Caco-2 (cell line): ENCODE measurements at regions of chr6 and their contacts with region 1.

Region 1: GRCh38 chr6:99330159-99330558 is 19.3 kb downstream of the FAXC start:
- DNase-seq: peak in 1 of 2 experiments; percentile 53
- H3K4me3 ChIP-seq: no peak overlapping the region
- H3K4me3 Mint-ChIP-seq: no peak overlapping the region
- H3K27ac Mint-ChIP-seq: no peak overlapping the region
- H3K4me1 ChIP-seq: no peaks in the 10 kb centered on the region
- H3K4me1 Mint-ChIP-seq: no peaks in the 10 kb centered on the region
- H3K27me3 ChIP-seq: no peaks in the 10 kb centered on the region
- H3K27me3 Mint-ChIP-seq: no peaks in the 10 kb centered on the region
- CTCF ChIP-seq: peak; percentile 49 to 66

Region 2: DNA sequence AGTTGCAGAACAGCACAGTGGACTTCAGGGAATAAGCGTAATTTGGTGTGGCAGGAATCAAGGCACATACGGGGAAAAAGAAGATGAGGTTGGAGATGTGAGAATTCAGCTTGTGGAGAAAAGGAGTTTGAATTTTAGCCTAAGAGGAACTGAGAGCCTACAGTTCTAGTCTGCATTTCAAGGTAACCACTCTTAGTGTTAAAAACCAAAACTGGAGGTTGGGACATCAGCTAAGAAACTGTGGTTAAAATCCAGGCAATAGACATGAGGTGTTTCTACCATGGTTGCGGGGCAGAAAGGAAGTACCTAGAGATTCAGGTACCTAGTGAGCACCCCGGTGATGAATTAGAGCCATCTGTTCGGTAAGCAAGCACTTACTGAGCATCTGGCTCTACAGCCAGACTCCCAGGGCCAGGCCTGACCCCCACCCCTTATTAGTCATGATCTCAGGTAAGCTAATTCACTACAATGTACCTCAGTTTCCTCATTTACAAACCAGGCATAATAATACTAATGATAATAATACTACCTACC is 25.1 kb before region 1 on chr6:
- CTCF ChIA-PET with region 1: no interaction called
- POLR2A ChIA-PET with region 1: no interaction called
- intact Hi-C with region 1: no loop called
- DNase-seq: no peak
- H3K4me3 ChIP-seq: no peak overlapping the region
- H3K4me3 Mint-ChIP-seq: no peak overlapping the region
- H3K27ac Mint-ChIP-seq: no peak overlapping the region
- H3K4me1 ChIP-seq: no peaks in the 10 kb centered on the region
- H3K4me1 Mint-ChIP-seq: no peaks in the 10 kb centered on the region
- H3K27me3 ChIP-seq: no peaks in the 10 kb centered on the region
- H3K27me3 Mint-ChIP-seq: peaks cover 16% of the 10 kb centered on the region
- CTCF ChIP-seq: no peak

Region 3: GRCh38 chr6:99349171-99350141 is 19.3 kb after region 1 on chr6 and contains the start of gene FAXC:
- CTCF ChIA-PET with region 1: interaction called, 3 read pairs
- POLR2A ChIA-PET with region 1: no interaction called
- intact Hi-C with region 1: loop called (anchors 2 kb)
- DNase-seq: peak; percentile 47 to 68
- H3K4me3 ChIP-seq: peak within 1 kb of the TSS; percentile 50
- H3K4me3 Mint-ChIP-seq: peak within 1 kb of the TSS; percentile 56
- H3K27ac Mint-ChIP-seq: no peak within 1 kb of the TSS
- H3K4me1 ChIP-seq: no peaks in the 10 kb centered on the region
- H3K4me1 Mint-ChIP-seq: no peaks in the 10 kb centered on the region
- H3K27me3 ChIP-seq: no peaks in the 10 kb centered on the region
- H3K27me3 Mint-ChIP-seq: peaks cover 15% of the 10 kb centered on the region
- CTCF ChIP-seq: peak; percentile 29 to 42
- total RNA-seq, gene FAXC: 0.16 and 0.86 TPM in 2 replicates

Region 4: DNA sequence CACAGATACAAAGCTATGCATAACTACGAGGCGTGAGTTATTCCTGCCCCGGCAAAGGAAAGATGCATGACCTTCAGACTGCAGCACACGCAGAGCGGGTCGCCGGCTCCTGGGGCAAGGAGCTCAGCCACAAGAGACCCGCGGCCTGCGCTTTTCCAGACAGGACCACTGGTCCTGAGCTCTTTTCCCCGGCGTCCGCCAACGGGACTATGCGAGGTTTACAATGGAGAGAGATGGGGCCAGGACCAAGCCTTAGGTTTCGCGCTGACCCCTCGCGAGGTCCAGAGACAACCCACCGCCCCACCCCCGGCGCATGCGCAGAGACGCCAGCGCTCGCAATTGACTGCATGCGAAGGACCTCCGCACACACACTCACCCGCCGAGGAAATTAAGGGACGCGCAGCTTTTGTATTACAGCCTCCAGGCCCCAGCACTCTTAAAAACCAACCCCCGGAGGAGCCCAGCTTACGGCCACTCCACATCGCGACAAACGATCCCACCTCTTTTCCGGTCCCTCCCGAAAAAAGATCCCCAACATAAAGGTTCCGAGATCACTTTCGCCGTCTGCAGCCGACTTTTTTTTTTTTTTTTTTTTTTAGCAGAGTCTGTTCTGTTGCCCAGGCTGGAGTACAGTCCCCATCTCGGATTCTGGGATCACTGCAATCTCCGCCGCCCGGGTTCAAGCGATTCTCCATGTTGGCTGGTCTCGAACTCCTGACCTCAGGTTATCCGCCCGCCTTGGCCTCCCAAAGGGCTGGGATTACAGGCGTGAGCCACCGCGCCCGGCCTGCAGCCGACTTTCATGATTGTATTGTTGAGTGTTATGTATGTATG is 63.8 kb after region 1 on chr6 and contains the start of gene COQ3:
- CTCF ChIA-PET with region 1: interaction called, 6 read pairs
- POLR2A ChIA-PET with region 1: interaction called, 5 read pairs
- intact Hi-C with region 1: loop called (anchors 1 kb)
- DNase-seq: peak; percentile 88
- H3K4me3 ChIP-seq: peak within 1 kb of the TSS; percentile 68
- H3K4me3 Mint-ChIP-seq: peak within 1 kb of the TSS; percentile 90
- H3K27ac Mint-ChIP-seq: peak within 1 kb of the TSS; percentile 92
- H3K4me1 ChIP-seq: no peaks in the 10 kb centered on the region
- H3K4me1 Mint-ChIP-seq: no peaks in the 10 kb centered on the region
- H3K27me3 ChIP-seq: no peaks in the 10 kb centered on the region
- H3K27me3 Mint-ChIP-seq: no peaks in the 10 kb centered on the region
- CTCF ChIP-seq: no peak
- total RNA-seq, gene COQ3: 5.8 and 6.4 TPM in 2 replicates

Region 5: DNA sequence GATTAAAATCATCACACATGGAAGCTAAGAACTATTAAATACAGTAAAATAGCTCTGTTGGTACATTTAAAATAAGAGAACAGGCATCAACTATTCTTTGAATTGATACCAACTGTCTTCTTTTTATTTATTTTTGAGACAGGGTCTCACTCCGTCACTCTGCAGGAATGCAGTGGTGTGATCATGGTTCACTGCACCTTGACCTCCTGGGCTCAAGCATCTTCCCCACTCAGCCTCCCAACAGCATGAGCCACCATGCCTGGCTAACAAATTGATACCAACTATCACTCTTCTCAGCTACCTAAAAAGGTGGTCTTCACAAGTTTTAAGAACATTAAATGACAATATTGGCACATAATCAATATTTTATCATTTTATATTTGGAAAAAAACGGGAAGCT is 102.7 kb after region 1 on chr6:
- CTCF ChIA-PET with region 1: no interaction called
- POLR2A ChIA-PET with region 1: no interaction called
- intact Hi-C with region 1: no loop called
- DNase-seq: peak in 1 of 2 experiments; percentile 9
- H3K4me3 ChIP-seq: no peak overlapping the region
- H3K4me3 Mint-ChIP-seq: no peak overlapping the region
- H3K27ac Mint-ChIP-seq: no peak overlapping the region
- H3K4me1 ChIP-seq: no peaks in the 10 kb centered on the region; the same call in 1 of the 2 replicates
- H3K4me1 Mint-ChIP-seq: no peaks in the 10 kb centered on the region
- H3K27me3 ChIP-seq: no peaks in the 10 kb centered on the region
- H3K27me3 Mint-ChIP-seq: no peaks in the 10 kb centered on the region
- CTCF ChIP-seq: no peak

Region 6: GRCh38 chr6:99746261-99746895 is 416.2 kb after region 1 on chr6:
- CTCF ChIA-PET with region 1: no interaction called
- POLR2A ChIA-PET with region 1: no interaction called
- intact Hi-C with region 1: loop called (anchors 1 kb)
- DNase-seq: peak; percentile 51 to 71
- H3K4me3 ChIP-seq: no peak overlapping the region
- H3K4me3 Mint-ChIP-seq: no peak overlapping the region
- H3K27ac Mint-ChIP-seq: no peak overlapping the region
- H3K4me1 ChIP-seq: no peaks in the 10 kb centered on the region
- H3K4me1 Mint-ChIP-seq: no peaks in the 10 kb centered on the region
- H3K27me3 ChIP-seq: no peaks in the 10 kb centered on the region
- H3K27me3 Mint-ChIP-seq: peaks cover 18% of the 10 kb centered on the region
- CTCF ChIP-seq: peak; percentile 63 to 64